ENCODE measurements at regions of chr16 and their contacts with region 1.

Region 1: DNA sequence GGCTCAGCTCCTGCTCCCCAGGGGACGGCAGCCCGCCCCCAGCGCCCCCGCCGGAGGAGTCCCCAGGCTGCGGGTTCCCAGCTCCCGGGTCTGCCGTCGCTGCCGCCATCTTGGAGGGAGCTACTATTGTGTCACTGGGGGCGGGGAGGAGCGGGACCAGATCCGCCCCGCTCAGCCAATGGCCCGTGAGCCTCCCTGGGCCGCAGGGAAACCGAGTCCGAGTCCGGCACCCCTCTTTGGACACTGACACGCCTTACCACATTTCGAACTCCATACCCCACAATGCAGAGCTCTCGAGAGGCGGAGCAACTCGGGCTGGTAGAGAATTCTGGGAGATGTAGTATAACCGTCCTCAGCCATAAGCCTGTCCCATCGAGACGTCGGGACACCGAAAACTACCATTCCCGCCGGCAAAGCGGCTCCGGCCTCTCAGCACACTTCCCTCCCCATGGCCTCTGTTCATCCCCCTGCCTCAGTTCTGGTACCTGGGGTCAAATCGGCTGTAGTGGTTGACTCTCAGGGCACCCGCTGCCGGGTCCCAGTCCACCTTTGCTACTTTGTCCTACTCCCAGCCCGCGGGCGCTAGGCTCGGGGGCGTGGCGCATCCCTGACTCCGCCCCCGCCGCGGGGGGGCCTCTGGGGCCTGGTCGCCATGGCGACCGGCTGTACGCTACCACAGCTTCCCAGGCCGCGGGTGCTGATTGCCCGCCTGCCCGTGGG is at the starts of genes RANBP10 and TSNAXIP1:
- DNase-seq: peak; percentile 97 to 99
- H3K4me3 ChIP-seq: peak within 1 kb of the TSS; percentile 87 to 91
- H3K27ac ChIP-seq: peak within 1 kb of the TSS; percentile 70 to 83
- H3K4me1 ChIP-seq: peaks cover 0 to 12% of the 10 kb centered on the region in 2 donors
- H3K27me3 ChIP-seq: no peaks in the 10 kb centered on the region
- CTCF ChIP-seq: no peak
- total RNA-seq, gene RANBP10: 50.0 TPM
- total RNA-seq, gene TSNAXIP1: 5.4 TPM

Region 2: DNA sequence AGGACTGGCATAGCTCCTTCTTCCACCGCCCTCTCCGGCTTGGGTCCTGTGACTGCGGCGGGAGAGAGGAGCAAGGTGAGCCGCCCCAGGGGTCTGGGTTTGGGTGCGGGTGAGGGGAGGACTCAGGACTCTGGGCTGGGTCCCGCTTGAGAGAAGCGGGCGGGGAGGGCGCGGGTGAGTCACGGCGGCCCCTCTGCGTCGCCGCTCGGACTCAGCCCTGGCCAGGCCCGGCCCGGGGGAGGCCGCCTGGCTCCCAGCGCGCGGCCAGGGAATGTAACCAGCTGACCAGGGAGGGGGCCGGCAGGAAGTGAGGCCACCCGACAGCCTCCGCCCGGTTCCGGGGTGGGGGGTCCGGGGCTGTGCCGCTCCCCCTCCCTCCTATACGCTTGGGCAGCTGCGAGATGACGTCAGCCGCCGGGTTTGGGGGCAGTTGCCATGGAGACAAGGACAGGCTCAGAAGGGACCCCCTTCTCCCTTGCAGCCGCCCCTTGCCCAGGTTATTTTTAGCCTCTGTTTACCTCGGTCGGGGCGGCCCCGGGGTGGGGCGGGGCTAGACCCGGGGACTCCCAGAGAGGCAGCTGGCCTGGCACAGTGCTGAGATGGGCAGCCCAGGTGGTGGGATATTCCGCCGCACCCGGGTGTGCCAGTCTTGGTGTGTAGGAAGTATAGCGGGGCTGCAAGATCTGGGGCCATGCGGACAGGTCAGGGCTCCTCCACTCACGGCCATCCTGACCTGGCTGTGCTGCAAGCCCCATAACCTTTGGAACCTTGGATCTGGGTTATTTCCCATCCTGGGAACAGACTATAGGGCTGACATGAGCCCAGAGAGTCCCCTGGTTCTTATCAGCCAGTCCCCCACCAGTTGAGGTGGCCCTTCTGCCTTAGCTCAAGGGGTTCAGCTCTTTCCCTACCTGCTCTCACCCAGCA is 276.3 kb before region 1 on chr16:
- intact Hi-C with region 1: loop called (anchors 5 kb)
- DNase-seq: peak; percentile 69 to 94
- H3K4me3 ChIP-seq: peak overlapping the region; percentile 77 to 97
- H3K27ac ChIP-seq: peak overlapping the region; percentile 93 to 99
- H3K4me1 ChIP-seq: peaks cover 7 to 9% of the 10 kb centered on the region in 2 donors
- H3K27me3 ChIP-seq: no peaks in the 10 kb centered on the region
- CTCF ChIP-seq: no peak

Region 3: GRCh38 chr16:67660564-67661028 is 146.0 kb before region 1 on chr16 and contains the start of gene PARD6A:
- intact Hi-C with region 1: loop called (anchors 1 kb)
- DNase-seq: peak; percentile 87 to 98
- H3K4me3 ChIP-seq: peak within 1 kb of the TSS; percentile 62 to 97
- H3K27ac ChIP-seq: peak within 1 kb of the TSS; percentile 86 to 90
- H3K4me1 ChIP-seq: peaks cover 11 to 17% of the 10 kb centered on the region in 2 donors
- H3K27me3 ChIP-seq: no peaks in the 10 kb centered on the region
- CTCF ChIP-seq: no peak
- total RNA-seq, gene PARD6A: 8.4 TPM

Region 4: GRCh38 chr16:67841764-67842508 is 35.3 kb after region 1 on chr16 and contains the start of gene THAP11:
- intact Hi-C with region 1: loop called (anchors 2 kb)
- DNase-seq: peak; percentile 67 to 97
- H3K4me3 ChIP-seq: peak within 1 kb of the TSS; percentile 86 to 96
- H3K27ac ChIP-seq: peak within 1 kb of the TSS; percentile 98 to 100
- H3K4me1 ChIP-seq: peaks cover 30 to 31% of the 10 kb centered on the region in 2 donors
- H3K27me3 ChIP-seq: no peaks in the 10 kb centered on the region
- CTCF ChIP-seq: peak; percentile 88 to 94 (median 93)
- total RNA-seq, gene THAP11: 85.4 TPM

Region 5: GRCh38 chr16:67951485-67951884 is 144.9 kb after region 1 on chr16:
- intact Hi-C with region 1: no loop called
- DNase-seq: no peak
- H3K4me3 ChIP-seq: no peak overlapping the region
- H3K27ac ChIP-seq: peak overlapping the region in 1 of 2 donors; percentile 33
- H3K4me1 ChIP-seq: no peaks in the 10 kb centered on the region
- H3K27me3 ChIP-seq: no peaks in the 10 kb centered on the region
- CTCF ChIP-seq: no peak

Region 6: GRCh38 chr16:68237243-68238028 is 430.8 kb after region 1 on chr16:
- intact Hi-C with region 1: loop called (anchors 5 kb)
- DNase-seq: peak; percentile 94 to 99
- H3K4me3 ChIP-seq: peak overlapping the region; percentile 54 to 69
- H3K27ac ChIP-seq: peak overlapping the region; percentile 78 to 92
- H3K4me1 ChIP-seq: peaks cover 11 to 16% of the 10 kb centered on the region in 2 donors
- H3K27me3 ChIP-seq: no peaks in the 10 kb centered on the region
- CTCF ChIP-seq: peak in 1 of 3 experiments; percentile 3

Measured in ascending aorta (tissue), 2 donors.